Posterior vena cava (tissue), 2 donors: ENCODE measurements at regions of chr11 and their contacts with region 1.

Region 1: GRCh38 chr11:34250732-34251639 is 106.8 kb downstream of the ABTB2 start:
- DNase-seq: peak; percentile 86

Region 2: DNA sequence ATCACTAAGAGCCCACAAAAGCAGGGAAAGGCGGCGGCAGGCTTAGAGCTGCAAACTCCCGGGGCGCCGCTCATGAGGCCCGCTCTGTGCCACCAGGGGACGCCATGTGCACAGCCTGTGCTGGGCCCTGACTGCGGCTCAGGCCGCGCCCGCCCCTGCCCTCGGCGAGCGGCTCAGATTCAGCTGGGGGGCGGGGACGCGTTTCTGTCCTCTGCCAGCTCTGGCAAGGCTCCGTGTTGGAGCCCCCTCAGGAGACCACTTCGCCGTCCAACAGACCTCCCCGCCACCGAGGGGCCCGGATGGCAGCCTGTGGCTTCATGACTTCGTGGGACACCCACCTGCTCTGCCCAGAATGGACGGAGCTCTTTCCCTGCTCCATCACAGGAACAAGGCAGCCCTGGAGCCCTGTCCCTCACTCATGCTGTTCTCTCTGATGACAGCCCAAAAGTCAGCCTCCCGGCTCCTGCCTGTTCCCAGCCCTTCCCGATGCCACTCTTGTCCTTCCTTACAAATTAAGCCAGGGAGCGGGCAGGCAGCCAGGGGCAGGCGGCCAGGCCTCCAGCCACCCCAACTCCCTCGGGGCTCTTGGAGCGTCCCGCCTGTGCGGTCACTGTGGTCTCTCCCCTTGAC is 76.5 kb before region 1 on chr11:
- intact Hi-C with region 1: loop called in 1 of 2 experiments (anchors 5 kb)
- DNase-seq: peak; percentile 95

Region 3: DNA sequence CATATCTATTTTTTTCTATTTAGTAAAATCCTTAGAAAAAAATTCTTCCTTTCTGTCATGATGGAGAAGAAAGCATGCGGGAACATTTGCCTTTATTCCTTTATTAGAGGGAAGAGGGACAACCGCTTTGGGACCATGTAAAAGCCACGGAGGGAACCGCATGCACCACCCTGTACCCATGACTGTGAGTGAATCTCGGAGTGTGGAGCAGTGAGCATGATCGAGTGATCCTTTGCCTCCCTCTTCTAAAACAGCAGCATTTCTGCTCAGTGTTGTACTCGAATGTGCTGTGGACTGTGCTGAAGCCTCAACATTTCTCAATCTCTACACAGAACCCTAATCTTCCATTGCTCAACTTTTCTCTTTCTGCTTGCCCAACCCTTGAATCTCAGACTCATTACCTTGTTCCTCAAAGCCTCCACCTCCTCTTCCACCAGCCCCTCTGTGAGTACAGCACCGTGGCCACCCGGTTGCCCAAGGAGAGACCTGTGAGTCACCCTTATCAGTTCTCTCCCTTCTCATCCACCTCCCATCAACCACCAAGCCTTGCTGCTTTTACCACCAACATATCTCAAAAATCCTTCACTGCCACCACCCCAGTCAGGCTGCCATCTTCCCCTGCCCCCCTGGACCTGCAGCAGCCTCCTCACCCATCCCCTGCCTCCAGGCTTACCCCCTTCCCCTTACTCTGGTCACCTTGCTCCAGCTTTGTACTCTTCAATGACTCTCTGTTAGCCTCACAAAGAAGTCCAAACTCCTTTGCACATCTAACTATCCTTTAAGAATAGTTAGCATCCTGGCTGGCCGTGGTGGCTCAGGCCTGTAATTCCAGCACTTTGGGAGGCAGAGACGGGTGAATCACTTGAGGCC is 42.5 kb before region 1 on chr11:
- intact Hi-C with region 1: no loop called
- DNase-seq: peak; percentile 73

Region 4: DNA sequence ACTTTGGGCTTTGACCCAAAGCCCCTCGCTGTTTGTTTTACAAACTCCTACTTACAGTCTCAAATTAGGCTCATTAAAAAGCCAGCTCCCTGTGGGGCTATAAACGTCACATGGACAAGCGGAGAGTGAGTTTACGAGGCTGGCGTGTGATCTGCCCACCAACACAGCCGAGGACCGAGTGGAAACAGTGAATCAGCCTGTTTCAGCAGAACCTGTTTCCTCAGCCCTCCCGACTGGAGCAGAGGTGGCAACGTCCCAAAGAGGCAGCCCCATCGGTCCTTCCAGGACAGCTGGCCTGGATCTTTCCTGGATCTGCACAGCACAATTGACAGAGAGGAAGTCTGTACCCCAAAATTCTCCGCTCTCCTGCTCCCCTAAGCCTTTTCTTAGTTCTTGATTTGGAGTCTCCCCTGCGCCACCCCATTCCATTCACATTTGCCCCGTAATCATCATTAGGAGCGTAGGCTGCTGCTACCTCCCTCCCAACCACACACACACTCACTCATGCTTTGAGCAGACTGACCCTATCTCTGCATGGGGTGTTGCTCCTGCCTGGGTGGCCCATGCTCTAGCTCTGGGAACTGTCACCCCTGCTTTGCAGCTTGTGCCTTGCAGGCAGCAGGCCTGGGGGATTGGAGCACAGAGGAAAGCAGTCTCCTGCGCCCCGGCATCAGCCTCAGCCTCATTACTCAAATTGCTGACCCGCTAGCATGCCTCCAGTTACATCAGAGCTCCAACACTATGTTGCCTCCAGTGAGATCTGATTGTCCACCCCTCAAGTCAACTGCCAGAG is 27.8 kb before region 1 on chr11:
- intact Hi-C with region 1: loop called in 1 of 2 experiments (anchors 1 kb)
- DNase-seq: peak; percentile 94

Region 5: GRCh38 chr11:34288492-34288891 is 37.5 kb after region 1 on chr11:
- intact Hi-C with region 1: no loop called
- DNase-seq: no peak

Region 6: DNA sequence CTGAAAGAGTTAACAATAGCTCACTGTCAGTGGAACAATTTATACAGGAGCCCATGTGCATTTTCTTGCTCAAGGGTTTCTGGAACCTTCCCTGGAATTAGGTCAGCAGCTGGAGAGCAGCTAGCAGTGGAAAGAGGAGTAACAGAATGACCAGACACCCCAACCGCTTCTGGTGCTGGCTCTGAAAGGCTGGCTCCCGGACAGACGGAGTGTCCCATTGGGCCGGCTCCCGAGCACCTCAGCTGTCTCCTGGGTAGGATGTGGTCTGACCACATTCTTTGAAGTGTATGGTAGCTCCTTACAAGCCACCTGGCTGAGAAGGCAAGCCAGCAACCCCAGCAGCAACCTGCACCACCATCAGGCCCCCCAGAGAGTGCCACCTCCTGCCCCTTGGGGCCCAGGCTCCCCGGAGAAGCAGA is 62.1 kb after region 1 on chr11:
- intact Hi-C with region 1: no loop called
- DNase-seq: no peak

Region 7: GRCh38 chr11:34599406-34599901 is 348.5 kb after region 1 on chr11:
- intact Hi-C with region 1: no loop called
- DNase-seq: no peak